Psoas muscle (tissue), 8 donors: ENCODE measurements at regions of chr4 and their contacts with region 1.

Region 1: DNA sequence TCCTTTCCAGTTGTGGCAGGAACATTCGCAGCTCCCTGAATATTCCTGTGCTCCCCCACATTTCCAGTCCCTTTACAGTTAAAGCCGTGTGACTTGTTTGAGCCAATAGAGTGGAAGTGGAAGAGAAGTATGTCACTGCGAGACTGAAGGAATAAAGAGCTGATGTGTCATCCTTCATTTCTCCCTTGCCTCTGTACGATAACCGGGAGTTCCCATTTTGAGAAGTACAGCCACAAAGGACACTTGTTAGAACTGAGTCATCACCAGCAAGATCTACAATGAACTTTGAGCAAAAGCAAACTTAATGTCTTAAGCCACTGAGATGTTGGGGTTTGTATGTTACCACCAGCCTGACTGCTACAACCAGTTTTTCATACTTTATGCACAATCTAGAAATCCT is 92.3 kb downstream of the SPRY1 start:
- DNase-seq: no peak
- ATAC-seq: peak in 3 of 4 donors; percentile 36 to 70 (median 57)
- H3K4me3 ChIP-seq: no peak overlapping the region
- H3K27ac ChIP-seq: no peak overlapping the region
- H3K4me1 ChIP-seq: no peaks in the 10 kb centered on the region
- H3K27me3 ChIP-seq: no peaks in the 10 kb centered on the region
- CTCF ChIP-seq: no peak

Region 2: DNA sequence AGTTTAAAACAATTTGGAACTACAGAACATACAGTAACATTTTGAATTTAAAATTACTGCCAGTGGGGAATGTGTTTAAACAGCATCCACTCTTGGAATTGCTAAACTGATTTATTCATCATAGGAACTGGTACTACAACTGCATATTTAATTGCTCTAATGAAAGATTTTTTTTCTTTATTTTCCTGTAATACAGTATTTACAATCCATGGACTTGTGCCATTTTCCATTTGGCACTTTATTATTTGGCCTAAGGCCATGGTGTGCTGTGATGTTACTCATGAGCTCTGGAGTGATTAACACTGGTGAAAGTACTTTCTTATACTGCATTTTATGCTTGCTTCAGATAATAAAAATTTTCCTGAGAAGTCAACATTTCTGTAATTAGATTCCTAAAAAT is 496.9 kb before region 1 on chr4:
- intact Hi-C with region 1: no loop called
- DNase-seq: no peak
- ATAC-seq: no peak
- H3K4me3 ChIP-seq: no peak overlapping the region
- H3K27ac ChIP-seq: no peak overlapping the region
- H3K4me1 ChIP-seq: no peaks in the 10 kb centered on the region
- H3K27me3 ChIP-seq: no peaks in the 10 kb centered on the region
- CTCF ChIP-seq: no peak

Region 3: DNA sequence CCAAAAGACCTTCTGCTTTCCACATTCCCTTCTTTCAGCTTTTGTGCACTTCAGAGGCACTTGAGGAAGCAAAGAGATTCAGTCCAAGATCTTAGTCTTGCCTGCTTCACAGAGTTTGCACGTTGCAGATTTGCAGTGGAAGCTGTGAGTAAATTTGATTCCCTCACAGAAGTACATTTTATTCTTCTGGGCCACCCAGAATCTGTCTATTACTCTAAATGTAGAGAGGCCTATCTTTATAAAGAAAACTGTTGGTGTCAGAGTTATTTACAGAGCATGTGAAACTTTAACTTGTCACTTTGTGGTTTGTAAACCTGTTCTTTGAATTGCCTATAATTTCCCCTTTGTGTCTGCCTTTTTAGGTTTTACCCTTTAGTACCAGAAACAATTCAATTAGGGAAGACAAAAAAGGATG is 76.8 kb before region 1 on chr4:
- intact Hi-C with region 1: loop called in 1 of 2 experiments (anchors 5 kb)
- DNase-seq: no peak
- ATAC-seq: no peak
- H3K4me3 ChIP-seq: no peak overlapping the region
- H3K27ac ChIP-seq: peak overlapping the region; percentile 98
- H3K4me1 ChIP-seq: peaks cover 46% of the 10 kb centered on the region
- H3K27me3 ChIP-seq: no peaks in the 10 kb centered on the region
- CTCF ChIP-seq: no peak

Region 4: GRCh38 chr4:123643691-123644090 is 154.8 kb after region 1 on chr4:
- intact Hi-C with region 1: no loop called
- DNase-seq: no peak
- ATAC-seq: no peak
- H3K4me3 ChIP-seq: no peak overlapping the region
- H3K27ac ChIP-seq: no peak overlapping the region
- H3K4me1 ChIP-seq: no peaks in the 10 kb centered on the region
- H3K27me3 ChIP-seq: no peaks in the 10 kb centered on the region
- CTCF ChIP-seq: no peak